GM12878 (cell line): ENCODE measurements at regions of chr5 and their contacts with region 1.

Region 1: DNA sequence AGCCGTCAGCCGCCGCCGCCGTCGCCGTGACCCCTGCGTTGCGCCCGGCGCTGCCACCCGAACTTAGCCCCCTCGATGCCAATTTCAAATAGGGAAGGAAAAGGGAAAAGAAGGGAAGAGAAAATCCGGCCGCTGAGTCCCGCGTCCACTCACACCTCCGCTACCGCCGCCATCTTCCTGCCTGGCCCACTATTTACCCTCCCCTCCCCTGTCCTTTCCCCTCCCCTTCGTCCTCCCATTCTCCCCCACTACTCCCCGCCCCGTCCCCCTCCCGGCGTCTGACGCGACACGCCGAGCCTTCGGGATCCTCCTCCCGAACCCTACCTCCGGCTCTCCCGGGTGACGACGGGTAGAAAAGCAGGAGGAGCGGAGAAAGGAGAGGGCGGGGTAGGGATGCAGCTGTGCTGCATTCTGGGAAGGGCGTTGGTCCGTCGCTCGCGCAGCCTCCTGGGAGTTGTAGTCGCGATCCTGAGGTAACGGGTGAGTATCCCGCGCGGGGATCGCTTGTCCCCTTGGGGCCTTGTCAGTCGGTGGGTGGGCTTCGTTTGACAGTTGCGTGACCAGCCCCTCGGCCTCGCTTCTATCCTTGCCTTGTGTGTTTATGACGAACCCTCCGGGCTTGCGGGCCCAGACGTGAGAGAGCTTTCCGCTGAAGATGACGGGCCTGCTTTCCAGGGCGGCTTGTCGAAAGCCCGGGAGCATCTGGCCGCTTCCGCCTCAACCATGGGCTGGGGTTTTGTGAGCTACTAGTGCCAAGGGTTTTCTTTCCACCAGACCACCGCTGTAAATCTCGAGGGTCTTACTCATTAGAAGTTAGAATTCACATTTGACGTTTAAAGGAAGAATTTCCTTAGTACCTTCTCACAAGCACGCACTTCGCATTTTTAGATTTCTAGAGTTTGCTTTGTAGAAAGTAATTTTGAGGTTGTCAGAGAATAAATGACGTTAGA is at the starts of genes CERT1 and POLK:
- DNase-seq: peak; percentile 96
- ATAC-seq: peak; percentile 76
- H3K4me3 ChIP-seq: peak within 1 kb of the TSS; percentile 98
- H3K27ac ChIP-seq: peak within 1 kb of the TSS; percentile 95
- H3K4me1 ChIP-seq: 0 out of 2 replicates have a peak, but pooled peaks cover 3% of the 10 kb centered on the region
- H3K27me3 ChIP-seq: no peaks in the 10 kb centered on the region
- CTCF ChIP-seq: no peak
- EP300 ChIP-seq: no peak; a peak in 1 of 4 replicates
- POLR2A ChIP-seq: peak; percentile 70
- RAD21 ChIP-seq: no peak; the same call in 1 of the 2 replicates
- polyA plus RNA-seq, gene CERT1: 7.7 to 10.4 TPM
- polyA plus RNA-seq, gene POLK: 10.4 to 10.7 TPM

Region 2: DNA sequence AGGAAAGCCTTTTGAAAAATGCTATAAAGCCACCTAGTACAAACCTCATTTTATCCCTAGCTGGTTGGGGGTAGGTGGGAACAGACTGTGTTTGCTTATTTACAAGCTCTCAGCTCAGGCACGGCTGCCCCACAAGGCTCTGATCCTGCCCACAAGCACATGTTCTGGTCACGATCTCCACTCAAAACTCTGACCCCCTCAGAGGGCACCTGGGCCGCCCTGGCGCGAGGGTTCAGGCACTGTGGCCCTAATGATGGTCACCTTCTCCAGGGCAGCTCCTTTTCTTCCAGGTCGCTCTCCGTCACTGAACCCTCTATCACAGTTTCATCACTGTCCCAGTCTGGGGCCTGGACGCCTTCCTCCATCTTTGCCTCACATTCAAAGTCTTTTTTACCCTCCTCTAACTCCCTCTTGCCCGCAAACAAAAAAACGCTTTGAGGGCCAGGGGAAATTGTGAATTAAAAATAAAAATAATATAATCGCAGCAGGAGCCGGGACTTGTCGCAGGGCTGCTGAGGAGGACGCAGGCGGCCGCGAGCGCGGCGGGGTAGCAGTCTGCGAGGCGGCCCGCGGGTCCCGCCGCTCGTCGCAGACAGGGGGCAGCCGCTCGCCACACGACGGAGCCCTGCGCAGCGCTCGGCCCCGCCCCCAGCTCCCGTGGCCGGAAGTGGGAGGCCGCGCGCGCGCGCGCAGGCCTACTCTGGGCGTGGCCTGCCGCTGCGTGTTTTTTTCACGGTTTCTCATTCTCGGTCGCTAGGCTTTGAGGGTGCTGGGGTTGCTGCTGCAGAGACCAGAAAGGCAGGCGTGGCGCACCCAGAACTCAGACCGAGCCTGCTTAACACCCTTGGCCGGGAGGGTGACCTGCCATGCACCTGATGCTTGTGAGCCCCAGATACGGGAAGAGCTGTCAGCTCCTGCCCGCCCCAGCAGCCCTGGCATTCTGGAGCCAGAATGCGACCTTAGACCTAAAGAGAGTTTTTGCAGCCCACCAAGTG is 275.1 kb before region 1 on chr5 and contains the start of gene ANKRD31:
- CTCF ChIA-PET with region 1: no interaction called
- POLR2A ChIA-PET with region 1: no interaction called
- RAD21 ChIA-PET with region 1: interaction called, 3 read pairs
- SMC1A ChIA-PET with region 1: no interaction called
- in situ Hi-C with region 1: no loop called
- intact Hi-C with region 1: loop called (anchors 10 kb)
- DNase-seq: peak; percentile 42
- ATAC-seq: peak; percentile 100
- H3K4me3 ChIP-seq: peak within 1 kb of the TSS; percentile 63
- H3K27ac ChIP-seq: no peak within 1 kb of the TSS
- H3K4me1 ChIP-seq: peaks cover 3% of the 10 kb centered on the region; the same call in 1 of the 2 replicates
- H3K27me3 ChIP-seq: no peaks in the 10 kb centered on the region
- CTCF ChIP-seq: peak; percentile 60 to 85 (median 72); a peak in 5 of 6 replicates
- EP300 ChIP-seq: peak in 1 of 2 experiments; percentile 16; a peak in 1 of 4 replicates
- POLR2A ChIP-seq: peak; percentile 71
- RAD21 ChIP-seq: peak; percentile 64
- polyA plus RNA-seq, gene ANKRD31: 0.02 TPM in 1 of 2 experiments, not detected in the other

Region 3: GRCh38 chr5:75336625-75337339 is 174.9 kb before region 1 on chr5 and contains the start of gene HMGCR:
- CTCF ChIA-PET with region 1: interaction called, 3 read pairs
- POLR2A ChIA-PET with region 1: interaction called, 14 read pairs
- RAD21 ChIA-PET with region 1: interaction called, 8 read pairs
- SMC1A ChIA-PET with region 1: interaction called, 9 read pairs
- in situ Hi-C with region 1: no loop called
- intact Hi-C with region 1: loop called (anchors 5 kb)
- DNase-seq: peak; percentile 98
- ATAC-seq: peak; percentile 97
- H3K4me3 ChIP-seq: peak within 1 kb of the TSS; percentile 91
- H3K27ac ChIP-seq: peak within 1 kb of the TSS; percentile 96
- H3K4me1 ChIP-seq: peaks cover 6% of the 10 kb centered on the region; the same call in 1 of the 2 replicates
- H3K27me3 ChIP-seq: no peaks in the 10 kb centered on the region
- CTCF ChIP-seq: peak; percentile 30 to 42 (median 32); a peak in 4 of 6 replicates
- EP300 ChIP-seq: peak in 1 of 2 experiments; percentile 51; a peak in 3 of 4 replicates
- POLR2A ChIP-seq: peak; percentile 98
- RAD21 ChIP-seq: no peak
- polyA plus RNA-seq, gene HMGCR: 30.8 to 39.0 TPM

Region 4: GRCh38 chr5:75524071-75524470 is 12.4 kb after region 1 on chr5:
- CTCF ChIA-PET with region 1: interaction called, 7 read pairs
- POLR2A ChIA-PET with region 1: interaction called, 9 read pairs
- RAD21 ChIA-PET with region 1: interaction called, 12 read pairs
- SMC1A ChIA-PET with region 1: interaction called, 20 read pairs
- in situ Hi-C with region 1: no loop called
- intact Hi-C with region 1: no loop called
- DNase-seq: peak; percentile 79
- ATAC-seq: peak; percentile 88
- H3K4me3 ChIP-seq: peak overlapping the region; percentile 6; the same call in 1 of the 2 replicates
- H3K27ac ChIP-seq: peak overlapping the region; percentile 59
- H3K4me1 ChIP-seq: peaks cover 34% of the 10 kb centered on the region
- H3K27me3 ChIP-seq: no peaks in the 10 kb centered on the region
- CTCF ChIP-seq: no peak
- EP300 ChIP-seq: no peak
- POLR2A ChIP-seq: no peak
- RAD21 ChIP-seq: 0 out of 2 replicates have a peak, but pooled peaks have one; percentile 0

Region 5: GRCh38 chr5:75566710-75567309 is 55.1 kb after region 1 on chr5:
- CTCF ChIA-PET with region 1: interaction called, 22 read pairs
- POLR2A ChIA-PET with region 1: interaction called, 29 read pairs
- RAD21 ChIA-PET with region 1: interaction called, 123 read pairs
- SMC1A ChIA-PET with region 1: interaction called, 60 read pairs
- in situ Hi-C with region 1: loop called (anchors 10 kb)
- intact Hi-C with region 1: loop called (anchors 2 kb)
- DNase-seq: peak; percentile 92
- ATAC-seq: peak; percentile 86
- H3K4me3 ChIP-seq: peak overlapping the region; percentile 29; the same call in 1 of the 2 replicates
- H3K27ac ChIP-seq: peak overlapping the region; percentile 96
- H3K4me1 ChIP-seq: peaks cover 36% of the 10 kb centered on the region
- H3K27me3 ChIP-seq: no peaks in the 10 kb centered on the region
- CTCF ChIP-seq: no peak
- EP300 ChIP-seq: peak; percentile 18 to 86; a peak in 2 of 4 replicates
- POLR2A ChIP-seq: no peak
- RAD21 ChIP-seq: peak; percentile 16; the same call in 1 of the 2 replicates

Region 6: GRCh38 chr5:75574791-75575190 is 63.1 kb after region 1 on chr5:
- CTCF ChIA-PET with region 1: interaction called, 22 read pairs
- POLR2A ChIA-PET with region 1: interaction called, 44 read pairs
- RAD21 ChIA-PET with region 1: interaction called, 115 read pairs
- SMC1A ChIA-PET with region 1: interaction called, 90 read pairs
- in situ Hi-C with region 1: loop called (anchors 10 kb)
- intact Hi-C with region 1: no loop called
- DNase-seq: no peak
- ATAC-seq: no peak; the same call in 2 of the 3 replicates
- H3K4me3 ChIP-seq: peak overlapping the region; percentile 40; the same call in 1 of the 2 replicates
- H3K27ac ChIP-seq: peak overlapping the region; percentile 84
- H3K4me1 ChIP-seq: peaks cover 15% of the 10 kb centered on the region
- H3K27me3 ChIP-seq: no peaks in the 10 kb centered on the region
- CTCF ChIP-seq: no peak
- EP300 ChIP-seq: no peak
- POLR2A ChIP-seq: no peak
- RAD21 ChIP-seq: no peak